B cell (primary cell): ENCODE measurements at regions of chr19 and their contacts with region 1.

Region 1: DNA sequence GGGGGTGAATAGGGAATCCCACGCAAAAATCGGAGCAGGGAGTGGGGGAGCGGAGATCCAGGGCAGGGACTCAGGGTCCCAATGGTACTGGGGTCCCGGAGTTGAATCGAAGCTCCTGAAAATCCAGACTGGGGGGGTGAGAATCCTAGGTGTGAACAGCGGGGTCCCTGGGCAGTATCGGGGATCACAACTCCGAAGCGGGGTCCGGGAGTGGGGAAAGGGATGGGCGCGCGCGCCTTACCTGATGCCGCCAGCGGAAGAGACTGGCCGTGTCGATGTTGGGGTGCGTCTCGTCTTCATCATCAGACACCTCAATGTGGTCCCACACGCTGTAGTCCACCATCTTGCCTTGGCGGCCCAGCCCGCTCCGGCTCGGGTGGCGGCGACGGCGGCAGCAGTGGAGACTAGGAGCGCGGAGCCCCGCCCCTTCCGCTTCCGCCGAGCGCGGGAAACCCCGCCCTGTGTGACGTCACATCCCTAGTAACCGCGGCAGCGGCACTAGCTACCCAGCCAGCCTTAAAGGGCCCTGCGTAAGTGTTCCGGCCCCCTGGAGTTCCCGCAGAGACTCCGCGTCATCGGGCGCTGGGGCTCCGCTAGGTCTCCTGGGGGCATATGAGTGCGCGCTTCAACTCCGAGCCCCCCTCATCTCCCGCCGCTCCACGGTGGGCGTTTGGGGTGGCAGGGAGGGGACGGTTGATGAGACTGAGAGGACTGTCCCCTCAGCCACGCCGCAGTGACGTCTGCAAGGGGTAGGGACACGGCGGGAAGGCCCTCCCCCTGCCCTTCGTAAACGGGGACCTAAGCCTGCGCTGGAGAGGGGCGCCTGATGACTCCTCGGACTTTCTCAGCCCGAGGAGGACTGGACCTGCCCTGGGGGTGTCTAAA is at the start of gene CDC37:
- DNase-seq: peak; percentile 99
- ATAC-seq: peak; percentile 78
- H3K4me3 ChIP-seq: peak within 1 kb of the TSS; percentile 87 to 98 (median 93)
- H3K4me3 Mint-ChIP-seq: peak within 1 kb of the TSS; percentile 94
- H3K27ac ChIP-seq: peak within 1 kb of the TSS; percentile 83 to 93
- H3K27ac Mint-ChIP-seq: peak within 1 kb of the TSS; percentile 91
- H3K4me1 ChIP-seq: peaks cover 49 to 86% of the 10 kb centered on the region in 2 donors
- H3K4me1 Mint-ChIP-seq: peaks cover 68% of the 10 kb centered on the region
- H3K27me3 ChIP-seq: no peaks in the 10 kb centered on the region
- H3K27me3 Mint-ChIP-seq: no peaks in the 10 kb centered on the region
- CTCF ChIP-seq: no peak
- total RNA-seq, gene CDC37: 178 and 193 TPM in 2 replicates

Region 2: GRCh38 chr19:9768175-9769112 is 634.9 kb before region 1 on chr19 and contains the start of gene ZNF846:
- CTCF ChIA-PET with region 1: no interaction called
- POLR2A ChIA-PET with region 1: no interaction called
- intact Hi-C with region 1: no loop called
- DNase-seq: peak; percentile 96
- ATAC-seq: peak; percentile 98
- H3K4me3 ChIP-seq: peak within 1 kb of the TSS; percentile 52 to 96 (median 88)
- H3K4me3 Mint-ChIP-seq: peak within 1 kb of the TSS; percentile 96
- H3K27ac ChIP-seq: peak within 1 kb of the TSS; percentile 69 to 94
- H3K27ac Mint-ChIP-seq: peak within 1 kb of the TSS; percentile 98
- H3K4me1 ChIP-seq: peaks cover 0 to 13% of the 10 kb centered on the region in 2 donors
- H3K4me1 Mint-ChIP-seq: peaks cover 15% of the 10 kb centered on the region
- H3K27me3 ChIP-seq: no peaks in the 10 kb centered on the region
- H3K27me3 Mint-ChIP-seq: no peaks in the 10 kb centered on the region
- CTCF ChIP-seq: no peak
- total RNA-seq, gene ZNF846: 18.2 and 24.5 TPM in 2 replicates

Region 3: DNA sequence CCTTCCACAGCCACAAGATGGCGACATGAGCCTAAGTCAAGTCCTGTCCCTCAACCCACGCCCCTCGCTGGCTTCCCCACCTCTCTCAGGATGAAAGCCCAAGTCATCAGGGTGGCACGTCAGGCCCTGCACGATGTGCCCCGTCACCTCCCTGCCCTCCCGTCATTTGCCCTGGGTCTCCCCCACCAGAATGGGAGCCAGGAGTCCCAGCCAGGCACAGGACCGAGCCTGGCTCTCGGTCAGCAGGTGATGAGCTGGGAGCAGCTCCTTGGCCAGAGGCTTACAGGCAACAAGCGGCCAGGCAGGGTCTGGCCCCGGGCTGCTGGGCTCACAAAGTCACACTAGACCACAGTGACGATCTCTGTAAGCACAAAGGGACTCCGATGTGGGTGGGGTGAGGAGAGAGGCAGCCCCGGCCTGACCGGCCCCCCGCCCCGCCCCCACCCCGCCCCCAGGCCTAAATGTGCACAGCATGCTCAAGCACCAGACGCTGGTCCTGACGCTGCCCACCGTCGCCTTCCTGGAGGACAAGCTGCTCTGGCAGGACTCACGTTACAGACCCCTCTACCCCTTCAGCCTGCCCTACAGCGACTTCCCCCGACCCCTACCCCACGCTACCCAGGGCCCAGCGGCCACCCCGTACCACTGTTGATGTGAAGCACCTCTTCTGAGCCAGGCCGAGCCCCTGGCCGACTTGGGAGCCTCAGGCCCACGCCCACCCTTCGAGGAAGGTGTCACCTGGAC is 144.0 kb before region 1 on chr19:
- CTCF ChIA-PET with region 1: interaction called, 15 read pairs
- POLR2A ChIA-PET with region 1: interaction called, 3 read pairs
- intact Hi-C with region 1: no loop called
- DNase-seq: peak; percentile 90
- ATAC-seq: peak; percentile 89
- H3K4me3 ChIP-seq: no peak overlapping the region
- H3K4me3 Mint-ChIP-seq: no peak overlapping the region
- H3K27ac ChIP-seq: no peak overlapping the region
- H3K27ac Mint-ChIP-seq: no peak overlapping the region
- H3K4me1 ChIP-seq: peaks cover 0 to 3% of the 10 kb centered on the region in 2 donors
- H3K4me1 Mint-ChIP-seq: no peaks in the 10 kb centered on the region
- H3K27me3 ChIP-seq: no peaks in the 10 kb centered on the region
- H3K27me3 Mint-ChIP-seq: no peaks in the 10 kb centered on the region
- CTCF ChIP-seq: peak; percentile 80

Region 4: DNA sequence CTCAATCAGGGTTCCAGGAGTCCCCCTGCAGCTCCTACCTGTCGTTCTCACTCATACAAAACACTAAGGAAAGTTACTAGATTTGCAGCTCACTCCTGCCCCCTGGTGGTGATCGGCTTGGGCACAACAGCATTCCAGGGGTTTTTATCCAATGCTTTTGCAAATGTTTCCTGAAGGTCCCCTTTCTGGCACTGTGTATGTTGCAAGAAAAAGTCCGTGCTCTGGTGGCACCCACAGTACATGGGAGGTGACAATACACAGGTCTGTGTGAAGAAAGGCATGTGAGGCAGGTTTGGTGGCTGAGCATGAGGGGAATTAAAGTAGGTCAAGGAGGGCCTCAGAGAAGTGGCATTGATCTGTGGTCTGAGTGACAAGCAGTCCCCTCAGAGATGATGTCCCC is 14.4 kb before region 1 on chr19:
- CTCF ChIA-PET with region 1: interaction called, 24 read pairs
- POLR2A ChIA-PET with region 1: no interaction called
- intact Hi-C with region 1: no loop called
- DNase-seq: peak; percentile 87
- ATAC-seq: peak; percentile 55
- H3K4me3 ChIP-seq: no peak overlapping the region
- H3K4me3 Mint-ChIP-seq: no peak overlapping the region
- H3K27ac ChIP-seq: no peak overlapping the region
- H3K27ac Mint-ChIP-seq: no peak overlapping the region
- H3K4me1 ChIP-seq: peaks cover 0 to 8% of the 10 kb centered on the region in 2 donors
- H3K4me1 Mint-ChIP-seq: peaks cover 10% of the 10 kb centered on the region
- H3K27me3 ChIP-seq: no peaks in the 10 kb centered on the region
- H3K27me3 Mint-ChIP-seq: no peaks in the 10 kb centered on the region
- CTCF ChIP-seq: peak; percentile 96

Region 5: DNA sequence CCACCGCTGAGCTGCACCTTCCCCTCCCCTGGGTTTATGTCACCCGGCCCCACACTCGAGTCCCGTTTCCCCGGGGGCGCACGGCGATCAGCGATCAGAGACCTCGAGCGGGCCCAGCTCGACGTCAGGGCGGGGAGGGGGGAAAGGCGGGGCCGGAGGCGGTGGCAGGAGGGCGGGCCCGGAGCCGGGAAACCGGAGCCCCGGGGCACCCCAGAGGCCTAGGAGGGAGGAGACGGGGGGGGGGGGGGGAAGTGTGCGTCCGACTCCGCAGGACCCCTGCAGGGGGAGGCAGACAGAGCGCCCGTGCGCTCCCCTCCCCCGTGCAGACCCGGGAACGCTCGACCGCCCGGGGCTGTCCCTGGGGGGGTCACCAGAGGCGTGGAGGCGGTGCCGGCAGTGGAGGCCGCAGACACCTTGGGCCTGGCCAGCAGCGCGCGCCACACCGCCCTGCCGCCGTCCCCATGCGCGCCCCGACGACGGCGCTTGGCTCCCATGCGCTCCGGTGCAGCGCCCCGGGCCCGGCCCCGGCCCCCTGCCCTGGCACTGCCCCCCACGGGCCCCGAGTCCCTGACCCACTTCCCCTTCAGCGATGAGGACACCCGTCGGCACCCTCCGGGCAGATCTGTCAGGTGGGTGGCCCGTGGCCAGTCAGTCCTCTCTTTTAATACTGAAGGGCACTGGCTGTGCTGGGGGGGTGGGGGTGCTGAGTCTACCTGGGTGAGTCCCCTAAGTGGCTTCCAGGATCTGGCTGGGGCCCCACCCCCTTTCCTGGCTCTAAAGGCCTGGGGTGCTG is 28.8 kb after region 1 on chr19:
- CTCF ChIA-PET with region 1: interaction called, 282 read pairs
- POLR2A ChIA-PET with region 1: interaction called, 15 read pairs
- intact Hi-C with region 1: loop called (anchors 1 kb)
- DNase-seq: peak; percentile 88
- ATAC-seq: peak; percentile 53
- H3K4me3 ChIP-seq: peak overlapping the region in 4 of 5 experiments; percentile 29 to 60 (median 43)
- H3K4me3 Mint-ChIP-seq: peak overlapping the region; percentile 94
- H3K27ac ChIP-seq: no peak overlapping the region
- H3K27ac Mint-ChIP-seq: peak overlapping the region; percentile 91
- H3K4me1 ChIP-seq: peaks cover 49 to 55% of the 10 kb centered on the region in 2 donors
- H3K4me1 Mint-ChIP-seq: peaks cover 60% of the 10 kb centered on the region
- H3K27me3 ChIP-seq: peaks cover 0 to 25% (median 12%) of the 10 kb centered on the region in 4 experiments
- H3K27me3 Mint-ChIP-seq: peaks cover 13% of the 10 kb centered on the region
- CTCF ChIP-seq: no peak

Region 6: GRCh38 chr19:10543420-10544241 is 140.3 kb after region 1 on chr19 and contains the start of gene ATG4D:
- CTCF ChIA-PET with region 1: interaction called, 3 read pairs
- POLR2A ChIA-PET with region 1: interaction called, 15 read pairs
- intact Hi-C with region 1: loop called (anchors 1 kb)
- DNase-seq: peak; percentile 88
- ATAC-seq: peak; percentile 82
- H3K4me3 ChIP-seq: peak within 1 kb of the TSS; percentile 27 to 88 (median 75)
- H3K4me3 Mint-ChIP-seq: peak within 1 kb of the TSS; percentile 89
- H3K27ac ChIP-seq: peak within 1 kb of the TSS; percentile 34 to 85
- H3K27ac Mint-ChIP-seq: peak within 1 kb of the TSS; percentile 87
- H3K4me1 ChIP-seq: peaks cover 12 to 19% of the 10 kb centered on the region in 2 donors
- H3K4me1 Mint-ChIP-seq: peaks cover 16% of the 10 kb centered on the region
- H3K27me3 ChIP-seq: peaks cover 0 to 5% (median 0%) of the 10 kb centered on the region in 4 experiments
- H3K27me3 Mint-ChIP-seq: peaks cover 6% of the 10 kb centered on the region
- CTCF ChIP-seq: no peak
- total RNA-seq, gene ATG4D: 58.8 and 59.2 TPM in 2 replicates

Region 7: DNA sequence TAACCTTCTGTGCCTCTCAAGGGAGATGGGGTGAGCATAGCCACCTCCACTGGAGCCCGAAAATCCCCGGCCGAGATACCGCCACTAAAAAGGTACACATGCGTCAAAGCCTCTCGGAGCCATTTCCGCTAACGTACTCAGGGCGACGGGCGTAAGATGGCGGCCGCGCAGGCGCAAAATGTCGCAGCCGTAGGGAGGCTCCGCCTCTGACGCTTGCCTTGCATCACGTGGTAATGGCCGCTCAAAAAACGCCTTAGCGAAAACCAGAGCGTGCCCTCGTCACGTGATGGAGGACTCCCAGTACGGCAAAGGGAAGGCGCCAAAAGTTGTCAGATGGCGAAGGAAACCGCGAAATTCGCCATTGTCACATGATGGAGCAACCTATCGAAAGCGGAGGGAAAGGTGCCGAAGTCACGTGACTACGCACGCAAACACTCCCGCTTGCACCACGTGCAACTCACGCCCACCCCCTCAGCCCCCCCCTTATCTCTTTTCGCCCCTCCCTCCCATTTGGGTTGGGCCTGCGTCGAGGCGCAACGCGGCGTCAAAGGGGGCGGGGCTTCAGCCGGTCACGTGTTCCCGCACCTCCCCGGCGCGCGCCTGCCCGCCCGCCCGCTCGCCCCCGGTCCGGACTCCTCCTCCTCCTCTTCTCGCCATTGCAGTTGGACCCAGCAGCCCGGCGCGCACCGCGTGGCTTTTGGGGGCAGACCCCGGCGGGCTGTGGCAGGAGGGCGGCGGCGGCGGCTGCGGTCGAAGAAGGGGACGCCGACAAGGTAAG is 250.5 kb after region 1 on chr19 and contains the start of gene ILF3:
- CTCF ChIA-PET with region 1: no interaction called
- POLR2A ChIA-PET with region 1: no interaction called
- intact Hi-C with region 1: loop called (anchors 5 kb)
- DNase-seq: peak; percentile 100
- ATAC-seq: peak; percentile 80
- H3K4me3 ChIP-seq: peak within 1 kb of the TSS; percentile 67 to 100 (median 96)
- H3K4me3 Mint-ChIP-seq: peak within 1 kb of the TSS; percentile 98
- H3K27ac ChIP-seq: peak within 1 kb of the TSS; percentile 99 to 100
- H3K27ac Mint-ChIP-seq: peak within 1 kb of the TSS; percentile 100
- H3K4me1 ChIP-seq: peaks cover 28 to 35% of the 10 kb centered on the region in 2 donors
- H3K4me1 Mint-ChIP-seq: peaks cover 42% of the 10 kb centered on the region
- H3K27me3 ChIP-seq: no peaks in the 10 kb centered on the region
- H3K27me3 Mint-ChIP-seq: no peaks in the 10 kb centered on the region
- CTCF ChIP-seq: no peak
- total RNA-seq, gene ILF3: 359 and 378 TPM in 2 replicates